MCF 10A (cell line): ENCODE measurements at regions of chr20 and their contacts with region 1.

Region 1: GRCh38 chr20:41063438-41063837 is 34.8 kb downstream of the TOP1 start:
- DNase-seq: no peak
- H3K4me3 Mint-ChIP-seq: no peak overlapping the region
- H3K27ac Mint-ChIP-seq: peak overlapping the region; percentile 42
- H3K4me1 Mint-ChIP-seq: peaks cover 27% of the 10 kb centered on the region
- H3K27me3 Mint-ChIP-seq: no peaks in the 10 kb centered on the region
- CTCF ChIP-seq: no peak

Region 2: GRCh38 chr20:41047975-41048305 is 15.5 kb before region 1 on chr20:
- CTCF ChIA-PET with region 1: interaction called, 9 read pairs
- POLR2A ChIA-PET with region 1: interaction called, 16 read pairs
- intact Hi-C with region 1: no loop called
- DNase-seq: peak; percentile 39
- H3K4me3 Mint-ChIP-seq: peak overlapping the region; percentile 73
- H3K27ac Mint-ChIP-seq: peak overlapping the region; percentile 5
- H3K4me1 Mint-ChIP-seq: peaks cover 66% of the 10 kb centered on the region
- H3K27me3 Mint-ChIP-seq: no peaks in the 10 kb centered on the region
- CTCF ChIP-seq: no peak

Region 3: DNA sequence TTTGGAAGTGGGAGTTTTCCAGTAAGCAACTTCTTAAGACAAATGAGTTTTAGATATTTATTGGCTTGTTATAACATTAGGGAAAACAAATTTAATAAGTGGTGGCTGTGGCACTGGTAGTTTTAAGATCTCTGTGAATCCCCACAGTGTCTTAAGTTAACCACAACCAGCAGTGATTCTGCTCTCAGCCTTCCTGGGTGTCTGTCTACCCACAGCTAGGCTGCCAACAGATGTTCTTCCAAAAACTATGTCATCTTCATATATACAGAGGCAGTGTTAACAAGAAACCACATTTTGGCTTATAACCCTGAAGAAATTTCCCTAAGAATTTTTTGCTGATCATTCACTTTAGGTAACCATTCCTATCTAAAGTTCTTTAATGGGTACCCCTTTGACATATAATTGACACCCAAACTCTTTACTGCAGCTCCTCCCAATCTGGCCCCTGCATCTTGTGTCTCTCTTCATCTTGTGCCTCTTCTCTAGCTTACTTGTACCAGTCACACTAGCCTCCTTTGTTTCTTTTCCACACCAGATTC is 17.9 kb after region 1 on chr20:
- CTCF ChIA-PET with region 1: no interaction called
- POLR2A ChIA-PET with region 1: no interaction called
- intact Hi-C with region 1: no loop called
- DNase-seq: no peak
- H3K4me3 Mint-ChIP-seq: no peak overlapping the region
- H3K27ac Mint-ChIP-seq: no peak overlapping the region
- H3K4me1 Mint-ChIP-seq: peaks cover 12% of the 10 kb centered on the region
- H3K27me3 Mint-ChIP-seq: no peaks in the 10 kb centered on the region
- CTCF ChIP-seq: no peak